GM18951 (cell line): ENCODE measurements at regions of chr5 and their contacts with region 1.

Region 1: DNA sequence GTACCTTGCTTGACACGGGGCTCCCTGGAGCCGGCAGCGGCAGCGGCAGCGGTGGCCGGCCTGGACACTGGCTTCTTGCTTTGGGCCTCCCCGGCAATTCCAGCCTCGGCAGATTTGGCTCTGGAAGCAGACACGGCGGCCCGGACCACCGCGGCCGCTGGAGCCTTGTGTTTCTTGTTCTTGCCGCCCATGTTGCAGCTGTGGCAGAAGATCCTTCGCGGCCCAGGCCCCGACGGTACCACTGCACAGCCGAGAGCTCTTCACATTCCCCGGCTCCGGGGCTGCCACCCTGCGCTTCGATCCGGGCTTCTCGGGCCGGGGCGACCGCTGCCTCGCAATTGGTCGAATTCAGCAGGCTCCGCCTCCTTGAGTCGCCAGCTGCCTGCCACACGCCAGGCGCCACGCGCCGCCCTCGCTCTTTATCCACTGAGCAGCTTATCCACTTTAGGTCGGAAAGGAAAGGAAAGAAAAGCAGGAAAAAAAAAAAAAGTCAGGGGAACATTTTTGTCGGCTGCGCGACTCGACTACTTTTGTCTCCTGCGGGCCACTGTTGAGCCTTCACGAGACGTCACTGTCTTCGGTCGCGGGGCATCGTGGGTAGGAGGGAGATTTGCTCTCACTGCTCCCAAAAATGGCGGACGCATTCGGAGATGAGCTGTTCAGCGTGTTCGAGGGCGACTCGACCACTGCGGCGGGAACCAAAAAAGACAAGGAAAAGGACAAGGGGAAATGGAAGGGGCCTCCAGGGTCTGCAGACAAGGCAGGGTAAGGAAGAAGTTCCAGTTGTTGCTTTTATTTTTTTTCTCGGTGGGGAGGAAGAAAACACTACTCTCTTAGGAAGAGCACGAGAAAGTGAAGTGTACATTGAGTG is at the starts of genes DHX29 and MTREX:
- POLR2A ChIP-seq: peak; percentile 75

Region 2: DNA sequence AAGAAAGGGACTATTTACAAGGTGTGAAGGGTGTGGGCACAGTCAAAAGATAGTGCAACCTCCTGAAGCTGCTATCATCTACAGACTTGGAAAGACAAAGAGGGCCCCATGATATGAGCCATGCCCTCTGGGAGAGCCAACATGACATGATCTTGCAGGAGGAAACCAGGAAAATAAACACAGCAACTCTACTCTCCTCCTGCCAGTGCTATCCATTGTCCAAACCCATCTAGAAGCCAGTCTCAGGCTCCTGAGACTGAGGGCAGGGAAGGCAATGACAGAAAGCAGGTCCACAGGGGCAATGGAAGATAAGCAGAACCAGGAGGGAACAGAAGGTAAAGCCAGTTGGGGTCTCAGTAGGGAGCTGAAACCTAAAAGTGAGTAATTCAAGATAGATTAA is 190.1 kb after region 1 on chr5:
- in situ Hi-C with region 1: no loop called
- POLR2A ChIP-seq: no peak

Region 3: DNA sequence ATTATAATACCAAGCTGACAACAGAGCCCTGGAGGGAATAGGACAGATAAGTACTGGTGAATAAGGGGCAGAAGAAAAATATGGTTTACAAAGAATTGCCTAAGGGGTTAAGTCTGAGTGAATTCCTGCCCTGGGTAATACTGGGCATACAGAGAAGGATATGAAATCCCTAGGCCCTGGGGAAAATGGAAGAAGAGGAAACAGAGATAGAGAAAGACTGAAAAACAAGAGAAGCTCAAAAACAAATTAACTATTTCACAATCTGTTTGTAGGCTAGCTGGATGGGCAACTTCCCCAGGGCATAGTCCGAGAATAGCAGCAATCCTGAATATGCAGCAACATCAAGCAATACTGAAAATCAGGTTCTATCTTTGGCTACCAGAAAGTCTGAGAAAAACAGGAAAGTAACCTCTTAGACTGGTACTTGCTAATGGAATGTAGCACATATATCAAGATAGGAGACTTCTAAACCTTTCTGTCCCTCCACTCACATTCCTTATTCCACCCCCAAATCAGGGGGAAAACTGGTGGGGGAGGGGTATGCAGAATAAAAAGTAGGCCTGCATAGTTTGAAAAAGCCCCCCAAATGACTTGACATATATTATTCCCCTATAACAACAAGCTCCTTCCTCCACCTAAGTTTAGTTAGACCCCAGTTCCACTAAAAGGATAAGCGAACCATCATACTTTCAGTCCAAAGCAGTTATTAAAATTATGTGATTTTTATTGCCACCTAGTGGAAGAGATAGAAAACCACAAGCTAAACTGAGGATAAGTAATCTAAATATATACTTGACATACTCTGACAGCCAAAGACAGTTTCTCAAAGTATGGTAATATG is 383.9 kb after region 1 on chr5:
- in situ Hi-C with region 1: loop called (anchors 25 kb)
- POLR2A ChIP-seq: no peak

Region 4: DNA sequence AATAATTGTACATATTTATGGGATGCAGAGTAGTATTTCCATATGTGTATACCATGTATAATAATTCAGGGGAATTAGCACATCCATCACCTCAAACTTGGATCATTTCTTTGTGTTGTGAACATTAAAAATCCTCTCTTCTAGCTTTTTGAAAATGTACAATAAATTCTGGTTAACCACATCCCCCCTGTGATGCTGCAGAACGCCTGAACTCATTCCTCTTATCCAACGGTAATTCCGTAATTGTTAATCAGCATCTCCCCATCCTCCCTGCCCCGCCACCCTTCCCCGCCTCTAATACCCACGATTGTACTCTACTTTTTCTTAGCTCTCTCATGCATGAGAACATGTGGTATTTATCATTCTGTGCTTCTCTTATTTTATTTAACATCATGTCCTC is 1053.2 kb after region 1 on chr5:
- in situ Hi-C with region 1: no loop called
- POLR2A ChIP-seq: no peak